GM12878 (cell line): ENCODE measurements at regions of chr14 and their contacts with region 1.

Region 1: DNA sequence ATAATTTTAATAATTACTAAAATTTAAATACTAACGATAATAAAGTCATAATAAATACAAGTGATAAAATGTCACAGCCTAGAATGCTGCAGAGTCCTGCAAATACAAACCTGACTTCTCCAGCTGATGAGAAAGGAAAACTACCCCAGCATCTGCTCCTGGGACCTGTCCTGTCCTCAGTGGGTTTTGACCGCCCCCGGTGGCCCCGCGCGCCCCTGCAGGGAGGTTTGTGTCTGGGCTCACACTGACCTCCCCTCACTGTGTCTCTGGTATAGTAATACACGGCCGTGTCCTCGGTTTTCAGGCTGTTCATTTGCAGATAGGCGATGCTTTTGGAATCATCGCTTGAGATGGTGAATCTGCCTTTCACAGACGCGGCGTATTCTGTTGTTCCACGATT is 1139.4 kb downstream of the TMEM121 start:
- DNase-seq: no peak
- ATAC-seq: no peak
- H3K4me3 ChIP-seq: no peak overlapping the region
- H3K27ac ChIP-seq: no peak overlapping the region
- H3K4me1 ChIP-seq: no peaks in the 10 kb centered on the region
- H3K27me3 ChIP-seq: peaks cover 0 to 3% of the 10 kb centered on the region in 2 experiments; a peak in 1 of 4 replicates
- CTCF ChIP-seq: no peak
- EP300 ChIP-seq: no peak
- POLR2A ChIP-seq: no peak
- RAD21 ChIP-seq: no peak

Region 2: DNA sequence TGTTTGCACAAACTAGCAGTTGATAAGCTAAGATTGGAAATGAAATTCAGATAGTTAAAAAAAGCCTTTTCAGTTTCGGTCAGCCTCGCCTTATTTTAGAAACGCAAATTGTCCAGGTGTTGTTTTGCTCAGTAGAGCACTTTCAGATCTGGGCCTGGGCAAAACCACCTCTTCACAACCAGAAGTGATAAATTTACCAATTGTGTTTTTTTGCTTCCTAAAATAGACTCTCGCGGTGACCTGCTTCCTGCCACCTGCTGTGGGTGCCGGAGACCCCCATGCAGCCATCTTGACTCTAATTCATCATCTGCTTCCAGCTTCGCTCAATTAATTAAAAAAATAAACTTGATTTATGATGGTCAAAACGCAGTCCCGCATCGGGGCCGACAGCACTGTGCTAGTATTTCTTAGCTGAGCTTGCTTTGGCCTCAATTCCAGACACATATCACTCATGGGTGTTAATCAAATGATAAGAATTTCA is 803.8 kb before region 1 on chr14:
- CTCF ChIA-PET with region 1: no interaction called
- POLR2A ChIA-PET with region 1: no interaction called
- RAD21 ChIA-PET with region 1: no interaction called
- SMC1A ChIA-PET with region 1: no interaction called
- in situ Hi-C with region 1: no loop called
- intact Hi-C with region 1: loop called (anchors 5 kb)
- DNase-seq: peak; percentile 88
- ATAC-seq: peak; percentile 41
- H3K4me3 ChIP-seq: peak overlapping the region; percentile 84
- H3K27ac ChIP-seq: peak overlapping the region; percentile 98
- H3K4me1 ChIP-seq: no peaks in the 10 kb centered on the region
- H3K27me3 ChIP-seq: no peaks in the 10 kb centered on the region
- CTCF ChIP-seq: no peak
- EP300 ChIP-seq: peak; percentile 99 to 100
- POLR2A ChIP-seq: no peak
- RAD21 ChIP-seq: no peak

Region 3: DNA sequence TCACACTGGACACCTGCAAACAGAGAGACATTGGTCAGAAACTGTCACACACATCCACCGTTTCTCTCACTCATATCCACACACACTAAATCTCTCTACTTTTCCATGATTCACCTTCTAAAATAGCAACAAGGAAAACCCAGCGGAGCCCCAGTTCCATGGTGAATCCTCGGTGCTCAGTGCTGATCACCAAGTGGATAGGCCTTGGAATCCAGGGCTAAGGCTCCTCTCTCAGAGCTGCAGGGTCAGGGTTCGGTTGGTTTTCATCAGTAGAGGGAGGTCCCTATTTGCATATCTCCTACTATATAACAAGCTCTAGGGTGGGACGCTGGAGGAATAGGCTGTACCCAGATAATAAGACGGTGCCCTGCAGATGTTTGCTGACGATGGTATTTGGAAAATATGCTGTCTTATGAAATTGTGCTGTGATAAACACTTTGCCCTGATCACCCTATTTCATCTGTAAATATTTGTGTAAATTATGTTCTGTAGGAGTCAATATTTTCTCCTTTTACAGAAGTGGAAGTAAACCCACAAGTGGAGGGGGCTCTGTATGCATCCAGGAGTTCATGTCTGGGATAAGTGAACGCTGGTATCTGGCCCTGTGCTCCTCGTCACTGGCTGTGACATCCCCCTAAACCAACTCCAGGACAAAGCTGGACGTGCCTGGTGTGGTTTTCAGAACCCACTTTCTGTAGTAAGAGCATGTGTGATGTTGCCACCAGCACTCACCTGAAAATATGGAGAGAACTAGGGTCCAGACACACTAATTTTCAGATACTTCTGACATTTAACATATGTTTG is 430.3 kb before region 1 on chr14:
- CTCF ChIA-PET with region 1: no interaction called
- POLR2A ChIA-PET with region 1: no interaction called
- RAD21 ChIA-PET with region 1: no interaction called
- SMC1A ChIA-PET with region 1: no interaction called
- in situ Hi-C with region 1: no loop called
- intact Hi-C with region 1: no loop called
- DNase-seq: no peak
- ATAC-seq: no peak
- H3K4me3 ChIP-seq: 0 out of 2 replicates have a peak overlapping the region, but pooled peaks have one; percentile 48
- H3K27ac ChIP-seq: peak overlapping the region; percentile 48; the same call in 1 of the 2 replicates
- H3K4me1 ChIP-seq: no peaks in the 10 kb centered on the region; the same call in 1 of the 2 replicates
- H3K27me3 ChIP-seq: no peaks in the 10 kb centered on the region
- CTCF ChIP-seq: no peak
- EP300 ChIP-seq: no peak
- POLR2A ChIP-seq: peak; percentile 80
- RAD21 ChIP-seq: no peak

Region 4: DNA sequence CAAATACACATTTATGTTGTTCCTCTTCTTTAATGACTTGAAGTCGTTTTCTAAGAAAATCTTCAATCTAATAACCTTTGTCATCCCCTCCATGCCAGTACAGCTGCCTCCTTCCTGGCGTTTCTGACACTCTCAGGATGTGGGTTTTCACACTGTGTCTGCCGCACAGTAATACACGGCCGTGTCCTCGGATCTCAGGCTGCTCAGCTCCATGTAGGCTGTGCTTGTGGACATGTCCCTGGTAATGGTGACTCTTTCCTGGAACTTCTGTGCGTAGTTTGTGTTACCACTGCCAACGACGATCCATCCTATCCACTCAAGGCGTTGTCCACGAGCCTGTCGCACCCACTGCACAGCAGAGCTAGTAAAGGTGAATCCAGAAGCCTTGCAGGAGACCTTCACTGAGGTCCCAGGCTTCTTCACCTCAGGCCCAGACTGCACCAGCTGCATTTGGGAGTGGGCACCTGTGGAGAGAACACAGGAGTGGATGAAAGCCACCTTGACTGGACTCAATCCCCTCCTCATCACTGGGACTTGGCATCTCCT is 43.5 kb before region 1 on chr14:
- CTCF ChIA-PET with region 1: interaction called, 29 read pairs
- POLR2A ChIA-PET with region 1: no interaction called
- RAD21 ChIA-PET with region 1: no interaction called
- SMC1A ChIA-PET with region 1: interaction called, 4 read pairs
- in situ Hi-C with region 1: no loop called
- intact Hi-C with region 1: no loop called
- DNase-seq: no peak
- ATAC-seq: no peak
- H3K4me3 ChIP-seq: no peak overlapping the region
- H3K27ac ChIP-seq: no peak overlapping the region
- H3K4me1 ChIP-seq: no peaks in the 10 kb centered on the region
- H3K27me3 ChIP-seq: peaks cover 3 to 6% of the 10 kb centered on the region in 2 experiments
- CTCF ChIP-seq: no peak
- EP300 ChIP-seq: no peak
- POLR2A ChIP-seq: no peak
- RAD21 ChIP-seq: no peak

Region 5: GRCh38 chr14:106691601-106692291 is 25.9 kb after region 1 on chr14:
- CTCF ChIA-PET with region 1: interaction called, 34 read pairs
- POLR2A ChIA-PET with region 1: no interaction called
- RAD21 ChIA-PET with region 1: interaction called, 3 read pairs
- SMC1A ChIA-PET with region 1: no interaction called
- in situ Hi-C with region 1: no loop called
- intact Hi-C with region 1: no loop called
- DNase-seq: peak; percentile 79
- ATAC-seq: peak; percentile 88
- H3K4me3 ChIP-seq: no peak overlapping the region
- H3K27ac ChIP-seq: no peak overlapping the region
- H3K4me1 ChIP-seq: peaks cover 6% of the 10 kb centered on the region
- H3K27me3 ChIP-seq: peaks cover 0 to 4% of the 10 kb centered on the region in 2 experiments; a peak in 1 of 4 replicates
- CTCF ChIP-seq: peak; percentile 91 to 100 (median 100)
- EP300 ChIP-seq: no peak
- POLR2A ChIP-seq: no peak
- RAD21 ChIP-seq: peak; percentile 55; the same call in 1 of the 2 replicates

Region 6: GRCh38 chr14:106738075-106738474 is 72.3 kb after region 1 on chr14:
- CTCF ChIA-PET with region 1: no interaction called
- POLR2A ChIA-PET with region 1: no interaction called
- RAD21 ChIA-PET with region 1: no interaction called
- SMC1A ChIA-PET with region 1: no interaction called
- in situ Hi-C with region 1: no loop called
- intact Hi-C with region 1: no loop called
- DNase-seq: no peak
- ATAC-seq: no peak
- H3K4me3 ChIP-seq: no peak overlapping the region
- H3K27ac ChIP-seq: no peak overlapping the region
- H3K4me1 ChIP-seq: no peaks in the 10 kb centered on the region
- H3K27me3 ChIP-seq: no peaks in the 10 kb centered on the region
- CTCF ChIP-seq: no peak
- EP300 ChIP-seq: no peak
- POLR2A ChIP-seq: no peak
- RAD21 ChIP-seq: no peak

Region 7: GRCh38 chr14:106790189-106791036 is 124.6 kb after region 1 on chr14:
- CTCF ChIA-PET with region 1: interaction called, 31 read pairs
- POLR2A ChIA-PET with region 1: no interaction called
- RAD21 ChIA-PET with region 1: no interaction called
- SMC1A ChIA-PET with region 1: no interaction called
- in situ Hi-C with region 1: no loop called
- intact Hi-C with region 1: no loop called
- DNase-seq: no peak
- ATAC-seq: peak; percentile 92
- H3K4me3 ChIP-seq: no peak overlapping the region
- H3K27ac ChIP-seq: no peak overlapping the region
- H3K4me1 ChIP-seq: no peaks in the 10 kb centered on the region
- H3K27me3 ChIP-seq: no peaks in the 10 kb centered on the region
- CTCF ChIP-seq: peak; percentile 72 to 95 (median 93)
- EP300 ChIP-seq: no peak
- POLR2A ChIP-seq: no peak
- RAD21 ChIP-seq: peak; percentile 82

Region 8: DNA sequence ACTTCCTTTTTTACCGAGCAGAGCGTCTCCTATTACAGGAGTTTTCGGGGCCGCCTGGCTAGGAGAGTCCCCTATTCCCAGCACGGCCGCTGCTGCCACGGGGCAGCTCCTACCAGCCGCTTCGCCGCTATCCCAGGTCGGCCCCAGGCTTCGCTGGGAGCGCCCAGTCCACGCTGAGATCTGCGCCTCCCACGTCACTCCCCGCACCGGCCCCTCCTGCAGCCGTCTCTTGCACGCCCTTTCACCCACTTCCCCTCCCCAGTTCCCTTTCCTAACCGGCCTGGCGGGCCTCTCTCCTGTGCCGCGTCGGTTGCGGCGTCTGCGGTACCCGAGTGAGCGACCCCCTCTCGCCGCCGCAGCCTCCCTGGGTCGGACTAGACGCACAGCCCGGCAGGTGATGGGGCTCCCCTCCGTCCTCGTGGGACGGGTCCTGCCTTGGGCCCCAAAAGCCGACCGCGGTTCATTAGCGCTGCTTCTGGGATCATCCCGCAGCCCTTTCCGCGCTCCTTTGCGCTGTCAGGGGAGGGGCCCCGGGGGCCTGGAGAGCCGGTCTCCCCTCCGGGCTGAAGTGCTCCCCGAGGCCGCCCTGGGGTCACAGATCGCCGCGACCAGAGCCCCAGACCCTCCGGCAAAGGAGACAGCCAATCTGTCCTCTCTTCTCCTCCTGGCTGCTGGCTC is 178.9 kb after region 1 on chr14:
- CTCF ChIA-PET with region 1: interaction called, 10 read pairs
- POLR2A ChIA-PET with region 1: no interaction called
- RAD21 ChIA-PET with region 1: no interaction called
- SMC1A ChIA-PET with region 1: no interaction called
- in situ Hi-C with region 1: no loop called
- intact Hi-C with region 1: no loop called
- DNase-seq: no peak
- ATAC-seq: peak; percentile 71
- H3K4me3 ChIP-seq: peak overlapping the region; percentile 80
- H3K27ac ChIP-seq: peak overlapping the region; percentile 88
- H3K4me1 ChIP-seq: peaks cover 30% of the 10 kb centered on the region
- H3K27me3 ChIP-seq: no peaks in the 10 kb centered on the region
- CTCF ChIP-seq: no peak
- EP300 ChIP-seq: peak in 1 of 2 experiments; percentile 16; a peak in 1 of 4 replicates
- POLR2A ChIP-seq: peak; percentile 77
- RAD21 ChIP-seq: no peak